ENCODE measurements at regions of chr6 and their contacts with region 1.

Region 1: GRCh38 chr6:131054392-131055250 is 8.4 kb downstream of the EPB41L2 start:
- DNase-seq: no peak
- H3K4me3 ChIP-seq: no peak overlapping the region
- H3K27ac ChIP-seq: no peak overlapping the region
- H3K4me1 ChIP-seq: no peaks in the 10 kb centered on the region
- H3K27me3 ChIP-seq: no peaks in the 10 kb centered on the region
- CTCF ChIP-seq: no peak
- POLR2A ChIP-seq: no peak

Region 2: DNA sequence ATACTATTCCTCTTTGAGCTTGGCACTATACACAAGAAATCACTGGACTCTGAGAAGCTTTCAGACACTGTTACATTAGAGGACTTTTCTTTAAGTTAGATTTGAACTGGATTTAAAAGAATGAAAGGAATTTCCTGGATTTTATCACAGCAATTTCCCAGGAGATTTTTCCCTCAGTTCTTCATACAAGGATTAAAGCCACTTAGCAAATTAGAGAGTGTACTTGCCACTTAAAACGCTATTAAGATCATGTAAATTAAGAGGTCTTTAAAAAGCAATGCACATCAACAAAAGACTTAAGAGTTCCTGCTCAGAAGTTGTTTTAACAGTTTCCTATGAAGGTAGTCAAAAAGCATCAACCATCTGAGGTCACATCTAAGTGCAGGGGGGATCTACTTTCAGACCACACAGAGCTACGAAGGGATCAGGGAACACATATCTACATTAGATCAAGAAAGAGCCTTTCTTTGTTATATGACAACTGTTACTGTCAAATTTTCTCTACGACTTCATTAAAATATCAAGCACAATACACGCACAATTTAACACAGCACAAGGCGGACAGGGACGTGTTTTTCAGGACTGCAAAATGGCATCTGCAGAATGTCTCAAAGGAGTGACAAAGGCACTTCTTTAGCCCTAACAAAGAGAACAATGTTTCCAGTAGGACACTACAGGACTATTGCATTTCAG is 57.4 kb before region 1 on chr6:
- intact Hi-C with region 1: loop called in 1 of 2 experiments (anchors 5 kb)
- DNase-seq: no peak
- H3K4me3 ChIP-seq: no peak overlapping the region
- H3K27ac ChIP-seq: no peak overlapping the region
- H3K4me1 ChIP-seq: peaks cover 5 to 39% of the 10 kb centered on the region in 2 donors
- H3K27me3 ChIP-seq: no peaks in the 10 kb centered on the region
- CTCF ChIP-seq: no peak
- POLR2A ChIP-seq: no peak

Measured in adrenal gland (tissue), 19 donors.